Mammary epithelial cell (primary cell): ENCODE measurements at regions of chr20 and their contacts with region 1.

Region 1: GRCh38 chr20:23050847-23051631 is 1.6 kb upstream of the THBD start:
- DNase-seq: peak; percentile 63
- H3K4me3 ChIP-seq: peak overlapping the region in 2 of 3 experiments; percentile 53 to 55
- H3K27ac ChIP-seq: no peak overlapping the region
- H3K4me1 ChIP-seq: peaks cover 38% of the 10 kb centered on the region
- H3K27me3 ChIP-seq: no peaks in the 10 kb centered on the region
- CTCF ChIP-seq: peak; percentile 76 to 81

Region 2: GRCh38 chr20:22716821-22717351 is 334.2 kb before region 1 on chr20:
- CTCF ChIA-PET with region 1: no interaction called
- dilution Hi-C with region 1: no loop called
- in situ Hi-C with region 1: loop called in 1 of 2 experiments (anchors 25 kb)
- intact Hi-C with region 1: no loop called
- DNase-seq: no peak
- H3K4me3 ChIP-seq: no peak overlapping the region
- H3K27ac ChIP-seq: no peak overlapping the region
- H3K4me1 ChIP-seq: peaks cover 14% of the 10 kb centered on the region
- H3K27me3 ChIP-seq: no peaks in the 10 kb centered on the region
- CTCF ChIP-seq: no peak

Region 3: GRCh38 chr20:23099791-23100698 is 49.0 kb after region 1 on chr20:
- CTCF ChIA-PET with region 1: no interaction called
- dilution Hi-C with region 1: no loop called
- in situ Hi-C with region 1: no loop called
- intact Hi-C with region 1: loop called (anchors 1 kb)
- DNase-seq: peak; percentile 98
- H3K4me3 ChIP-seq: no peak overlapping the region
- H3K27ac ChIP-seq: no peak overlapping the region
- H3K4me1 ChIP-seq: peaks cover 37% of the 10 kb centered on the region
- H3K27me3 ChIP-seq: no peaks in the 10 kb centered on the region
- CTCF ChIP-seq: no peak

Region 4: GRCh38 chr20:23178806-23179205 is 127.8 kb after region 1 on chr20:
- CTCF ChIA-PET with region 1: no interaction called
- dilution Hi-C with region 1: no loop called
- in situ Hi-C with region 1: no loop called
- intact Hi-C with region 1: loop called (anchors 1 kb)
- DNase-seq: no peak
- H3K4me3 ChIP-seq: no peak overlapping the region
- H3K27ac ChIP-seq: no peak overlapping the region
- H3K4me1 ChIP-seq: no peaks in the 10 kb centered on the region
- H3K27me3 ChIP-seq: no peaks in the 10 kb centered on the region
- CTCF ChIP-seq: peak; percentile 17 to 57

Region 5: DNA sequence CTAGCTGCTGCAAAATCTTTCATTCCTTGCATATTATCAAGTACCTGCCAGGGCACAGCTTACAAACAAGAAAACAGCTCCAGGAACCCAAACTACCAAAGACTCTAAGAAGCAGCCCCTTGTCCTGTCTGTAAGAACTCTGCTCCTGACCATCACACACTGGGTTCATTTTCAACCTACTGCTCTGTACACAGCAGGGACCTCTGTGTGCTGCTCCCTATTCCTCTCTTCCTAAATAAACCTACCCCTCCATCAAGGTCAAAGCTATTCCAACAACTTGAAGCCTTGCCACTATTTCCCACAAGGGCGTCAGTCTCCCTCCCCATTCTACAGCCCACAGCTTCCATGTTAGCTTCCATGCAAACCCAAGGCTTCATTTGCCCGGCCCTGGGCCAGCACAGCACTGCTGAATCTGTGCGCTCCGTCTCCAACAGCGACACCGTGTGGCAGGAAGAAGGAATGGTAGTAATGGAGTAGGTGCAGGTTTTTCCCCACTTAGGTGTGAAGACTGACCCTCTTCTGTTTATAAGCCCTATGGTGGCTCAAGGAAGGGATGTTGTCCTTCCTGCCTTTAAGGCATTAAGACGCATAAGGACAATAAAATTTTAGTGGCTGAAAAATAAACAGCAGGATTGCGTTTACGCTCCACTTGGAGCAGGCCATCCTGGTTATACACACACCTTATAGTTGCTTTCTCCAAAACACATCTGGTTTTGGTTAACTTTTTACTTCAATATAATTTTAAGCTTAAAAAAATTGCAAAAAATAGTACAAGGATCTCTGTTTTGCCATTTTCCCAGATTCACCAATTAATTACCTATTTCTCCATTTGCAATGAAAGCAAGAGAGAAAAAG is 184.4 kb after region 1 on chr20:
- CTCF ChIA-PET with region 1: no interaction called
- dilution Hi-C with region 1: no loop called
- in situ Hi-C with region 1: no loop called
- intact Hi-C with region 1: loop called (anchors 1 kb)
- DNase-seq: peak; percentile 40
- H3K4me3 ChIP-seq: no peak overlapping the region
- H3K27ac ChIP-seq: no peak overlapping the region
- H3K4me1 ChIP-seq: no peaks in the 10 kb centered on the region
- H3K27me3 ChIP-seq: no peaks in the 10 kb centered on the region
- CTCF ChIP-seq: peak; percentile 78 to 92

Region 6: GRCh38 chr20:23350196-23350903 is 299.3 kb after region 1 on chr20 and contains the start of gene NXT1:
- CTCF ChIA-PET with region 1: no interaction called
- dilution Hi-C with region 1: no loop called
- in situ Hi-C with region 1: loop called in 1 of 2 experiments (anchors 25 kb)
- intact Hi-C with region 1: no loop called
- DNase-seq: peak; percentile 99
- H3K4me3 ChIP-seq: peak within 1 kb of the TSS; percentile 74 to 89 (median 78)
- H3K27ac ChIP-seq: peak within 1 kb of the TSS; percentile 81
- H3K4me1 ChIP-seq: peaks cover 13% of the 10 kb centered on the region
- H3K27me3 ChIP-seq: no peaks in the 10 kb centered on the region
- CTCF ChIP-seq: peak in 1 of 2 donors; percentile 0
- total RNA-seq, gene NXT1: 22.0 to 28.5 TPM